ENCODE measurements at regions of chr7 and their contacts with region 1.

Region 1: DNA sequence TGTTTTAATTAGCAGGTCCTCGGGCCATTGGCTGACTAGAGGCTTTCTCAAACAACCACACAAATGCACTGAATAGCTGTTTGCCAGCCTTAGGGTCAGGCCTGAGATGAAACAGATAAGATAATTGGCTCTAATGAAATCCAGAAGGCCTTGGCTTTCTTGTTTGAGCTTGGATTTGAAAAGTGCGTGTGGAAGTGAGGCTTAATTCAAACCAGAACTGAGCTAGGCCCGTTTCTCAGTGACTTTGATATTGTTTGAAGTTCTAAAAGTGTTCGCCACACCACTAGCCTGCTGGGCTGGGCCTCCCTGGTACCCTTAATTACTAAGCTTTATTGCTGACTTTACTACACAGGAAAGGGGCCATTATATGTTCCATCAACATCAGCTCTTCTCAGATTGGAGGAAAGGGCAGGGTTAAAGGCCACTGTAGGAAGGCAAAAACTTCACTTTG is 270.6 kb downstream of the TWIST1 start:
- DNase-seq: peak; percentile 75
- H3K4me3 ChIP-seq: no peak overlapping the region
- H3K27ac ChIP-seq: peak overlapping the region; percentile 60 to 100; a peak in 3 of 4 replicates
- H3K4me1 ChIP-seq: peaks cover 23 to 52% of the 10 kb centered on the region in 2 experiments
- H3K27me3 ChIP-seq: no peaks in the 10 kb centered on the region
- CTCF ChIP-seq: no peak
- EP300 ChIP-seq: peak; percentile 96 to 100
- RAD21 ChIP-seq: peak; percentile 60

Region 2: GRCh38 chr7:18700147-18700546 is 146.6 kb before region 1 on chr7:
- CTCF ChIA-PET with region 1: interaction called, 30 read pairs
- POLR2A ChIA-PET with region 1: interaction called, 17 read pairs
- DNase-seq: no peak
- H3K4me3 ChIP-seq: no peak overlapping the region
- H3K27ac ChIP-seq: peak overlapping the region in 1 of 2 experiments; percentile 100; a peak in 2 of 4 replicates
- H3K4me1 ChIP-seq: peaks cover 0 to 61% of the 10 kb centered on the region in 2 experiments; a peak in 3 of 4 replicates
- H3K27me3 ChIP-seq: no peaks in the 10 kb centered on the region
- CTCF ChIP-seq: peak; percentile 44
- EP300 ChIP-seq: no peak
- RAD21 ChIP-seq: no peak

Region 3: DNA sequence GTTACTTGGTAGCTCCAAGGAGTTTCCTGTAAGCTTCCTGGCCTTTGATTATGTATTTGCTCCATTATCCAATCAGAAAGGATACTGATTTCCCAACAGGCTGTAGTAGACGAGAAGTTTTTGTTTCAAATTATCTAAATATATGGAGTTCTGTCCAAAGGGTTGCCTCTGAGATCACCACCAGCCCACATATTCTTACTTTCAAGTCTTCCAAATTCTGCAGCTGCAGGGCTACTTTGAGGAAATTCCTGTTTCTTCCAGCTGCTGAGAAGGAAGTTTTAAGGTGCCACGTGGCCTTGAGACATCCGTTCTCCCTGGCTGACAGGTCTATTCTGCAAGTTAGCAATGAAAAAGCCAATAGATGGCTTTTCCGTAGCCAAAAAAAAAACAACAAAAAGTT is 15.4 kb before region 1 on chr7:
- CTCF ChIA-PET with region 1: interaction called, 10 read pairs
- POLR2A ChIA-PET with region 1: interaction called, 6 read pairs
- DNase-seq: no peak
- H3K4me3 ChIP-seq: no peak overlapping the region
- H3K27ac ChIP-seq: peak overlapping the region in 1 of 2 experiments; percentile 100; a peak in 2 of 4 replicates
- H3K4me1 ChIP-seq: peaks cover 26 to 46% of the 10 kb centered on the region in 2 experiments
- H3K27me3 ChIP-seq: no peaks in the 10 kb centered on the region
- CTCF ChIP-seq: no peak
- EP300 ChIP-seq: no peak
- RAD21 ChIP-seq: no peak

Region 4: DNA sequence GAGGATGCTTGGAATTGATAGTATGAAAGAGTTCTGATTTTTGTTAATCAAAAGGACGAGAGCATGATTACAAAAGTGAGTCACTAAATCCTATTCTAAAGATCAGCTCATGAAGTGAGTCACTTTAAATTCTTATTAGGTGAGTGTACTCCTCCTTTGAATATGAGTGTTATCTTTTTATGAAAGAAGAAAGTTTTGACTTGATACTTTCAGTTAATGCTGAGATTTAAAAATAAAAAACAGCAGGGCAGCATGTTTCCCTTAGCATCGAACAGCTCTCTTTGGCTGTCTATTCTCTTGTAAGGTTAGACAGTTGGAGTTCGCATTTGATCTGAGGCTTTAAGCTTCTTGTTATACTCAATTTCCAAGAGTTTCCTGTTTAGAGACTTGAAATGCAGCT is 48.7 kb after region 1 on chr7:
- CTCF ChIA-PET with region 1: interaction called, 36 read pairs
- POLR2A ChIA-PET with region 1: interaction called, 20 read pairs
- DNase-seq: no peak
- H3K4me3 ChIP-seq: peak overlapping the region; percentile 26 to 33; a peak in 3 of 4 replicates
- H3K27ac ChIP-seq: peak overlapping the region; percentile 90 to 100
- H3K4me1 ChIP-seq: peaks cover 18 to 63% of the 10 kb centered on the region in 2 experiments; a peak in 3 of 4 replicates
- H3K27me3 ChIP-seq: no peaks in the 10 kb centered on the region
- CTCF ChIP-seq: no peak
- EP300 ChIP-seq: peak in 1 of 2 experiments; percentile 94; a peak in 2 of 4 replicates
- RAD21 ChIP-seq: no peak